Posterior vena cava (tissue), 2 donors: ENCODE measurements at regions of chr15 and their contacts with region 1.

Region 1: DNA sequence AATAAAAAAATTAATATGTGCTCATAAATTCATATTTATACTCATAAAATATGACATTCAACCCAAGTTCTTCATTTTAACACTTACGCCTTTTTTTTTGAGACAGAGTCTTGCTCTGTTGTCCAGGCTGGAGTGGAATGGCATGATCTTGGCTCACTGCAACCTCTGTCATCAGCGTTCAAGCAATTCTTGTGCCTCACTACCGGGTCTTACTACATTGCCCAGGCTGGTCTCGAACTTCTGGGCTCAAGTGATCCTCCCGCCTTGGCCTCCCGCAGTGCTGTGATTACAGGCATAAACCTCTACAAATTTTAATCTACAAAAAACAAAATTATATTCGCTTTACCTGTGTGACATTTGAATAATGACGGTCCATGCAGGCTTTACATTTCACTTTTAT is 74.1 kb upstream of the SNRPN start:
- DNase-seq: no peak

Region 2: GRCh38 chr15:24835301-24835700 is 45.4 kb before region 1 on chr15:
- intact Hi-C with region 1: loop called in 1 of 2 experiments (anchors 1 kb)
- DNase-seq: no peak

Region 3: GRCh38 chr15:25655207-25655948 is 774.7 kb after region 1 on chr15:
- intact Hi-C with region 1: no loop called
- DNase-seq: no peak